Activated CD4-positive, alpha-beta memory T cell treated with anti-CD3 and anti-CD28 coated beads, Interleukin-2, amount 10 ng/mL, durations not matched to agents 7 days and 5 days (primary cell): ENCODE measurements at regions of chr17 and their contacts with region 1.

Region 1: DNA sequence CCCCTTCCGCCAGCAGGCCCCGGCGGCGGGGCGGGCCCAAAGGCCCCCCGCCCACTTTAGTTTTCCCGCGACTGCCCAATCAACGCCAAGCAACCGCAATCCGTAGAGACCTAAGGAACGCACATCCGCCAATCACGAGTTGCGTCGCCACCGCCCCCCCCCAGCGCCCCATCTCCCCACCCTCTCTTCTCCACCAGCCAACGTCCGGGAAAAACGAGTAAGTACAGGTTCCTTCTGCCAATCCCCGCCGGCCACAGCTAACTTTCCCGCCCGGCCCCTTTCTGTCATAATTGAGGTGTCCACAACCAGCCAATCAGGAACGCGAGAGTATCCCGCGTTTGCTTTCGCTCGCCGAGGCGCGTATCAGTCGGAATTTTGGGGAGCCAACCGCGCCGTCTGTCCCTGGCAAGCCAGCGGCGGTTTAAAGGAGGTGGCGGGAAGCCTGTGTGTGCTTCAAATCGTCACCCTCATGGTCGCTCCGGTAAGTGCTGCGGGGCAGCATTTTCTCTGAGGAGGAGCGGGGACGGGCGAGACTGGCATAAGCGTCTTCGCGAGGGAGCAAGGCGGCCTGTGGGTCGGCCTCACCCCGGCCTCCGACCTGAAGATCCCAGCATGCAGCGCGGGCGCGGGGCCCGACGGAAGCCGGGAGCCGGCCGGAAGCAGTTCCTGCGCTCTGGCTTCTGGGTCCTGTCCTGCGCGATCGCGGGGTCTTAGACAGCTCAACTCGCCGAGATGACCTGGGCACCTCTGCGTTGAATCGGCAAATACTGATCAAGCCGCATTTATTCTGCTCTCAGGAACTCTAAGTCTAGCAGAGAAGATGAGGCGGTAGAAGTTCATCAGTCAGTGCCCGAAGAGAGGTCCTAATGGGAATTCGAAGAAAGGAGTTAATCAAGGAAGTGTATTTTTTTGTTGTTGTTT is at the start of gene MIS12:
- DNase-seq: peak; percentile 98
- H3K4me3 Mint-ChIP-seq: peak within 1 kb of the TSS; percentile 90
- H3K27ac Mint-ChIP-seq: peak within 1 kb of the TSS; percentile 96
- H3K4me1 Mint-ChIP-seq: peaks cover 56% of the 10 kb centered on the region
- H3K27me3 Mint-ChIP-seq: no peaks in the 10 kb centered on the region
- total RNA-seq, gene MIS12: 28.7 to 29.0 TPM

Region 2: DNA sequence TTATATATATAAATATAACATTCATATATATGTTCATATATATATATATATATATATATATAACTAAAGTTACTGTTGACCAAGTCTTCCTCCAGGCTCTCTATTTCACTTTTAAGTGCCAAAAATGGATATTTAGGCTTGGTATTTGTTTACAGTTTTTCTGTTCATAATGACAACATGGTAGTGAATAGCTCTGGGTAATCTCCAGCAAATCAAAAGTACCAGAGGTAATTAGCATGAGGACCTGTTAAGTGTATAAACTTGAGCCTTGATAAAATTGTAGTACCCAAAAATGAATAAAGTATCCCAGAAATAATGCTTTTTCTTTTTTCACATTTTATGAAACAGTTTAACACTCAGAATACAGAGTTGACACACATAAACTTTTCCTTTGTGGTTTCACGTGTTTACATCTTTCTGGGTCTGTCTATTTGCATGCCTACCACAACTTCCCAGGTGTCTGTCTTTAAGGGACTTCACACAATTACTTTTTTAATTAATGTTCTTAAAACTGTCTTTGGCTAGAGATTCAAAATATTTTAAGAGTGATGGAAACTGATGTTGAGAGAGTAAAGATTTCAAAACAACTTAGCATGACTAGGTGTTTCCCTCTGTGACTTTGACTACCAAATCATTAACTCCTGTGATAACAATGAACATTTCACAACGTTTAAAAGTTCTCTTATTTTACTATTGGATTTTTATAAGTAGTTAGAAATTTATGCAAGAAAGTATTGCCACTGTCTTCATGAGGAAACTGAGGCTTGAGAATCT is 156.5 kb before region 1 on chr17:
- CTCF ChIA-PET with region 1: no interaction called
- POLR2A ChIA-PET with region 1: no interaction called
- DNase-seq: no peak
- H3K4me3 Mint-ChIP-seq: no peak overlapping the region
- H3K27ac Mint-ChIP-seq: peak overlapping the region; percentile 14
- H3K4me1 Mint-ChIP-seq: peaks cover 25% of the 10 kb centered on the region
- H3K27me3 Mint-ChIP-seq: no peaks in the 10 kb centered on the region

Region 3: GRCh38 chr17:5419356-5419958 is 67.0 kb before region 1 on chr17 and contains the start of gene NUP88:
- CTCF ChIA-PET with region 1: no interaction called
- POLR2A ChIA-PET with region 1: interaction called, 22 read pairs
- DNase-seq: peak; percentile 97
- H3K4me3 Mint-ChIP-seq: peak within 1 kb of the TSS; percentile 99
- H3K27ac Mint-ChIP-seq: peak within 1 kb of the TSS; percentile 99
- H3K4me1 Mint-ChIP-seq: peaks cover 45% of the 10 kb centered on the region
- H3K27me3 Mint-ChIP-seq: no peaks in the 10 kb centered on the region
- total RNA-seq, gene NUP88: 80.6 to 85.9 TPM

Region 4: DNA sequence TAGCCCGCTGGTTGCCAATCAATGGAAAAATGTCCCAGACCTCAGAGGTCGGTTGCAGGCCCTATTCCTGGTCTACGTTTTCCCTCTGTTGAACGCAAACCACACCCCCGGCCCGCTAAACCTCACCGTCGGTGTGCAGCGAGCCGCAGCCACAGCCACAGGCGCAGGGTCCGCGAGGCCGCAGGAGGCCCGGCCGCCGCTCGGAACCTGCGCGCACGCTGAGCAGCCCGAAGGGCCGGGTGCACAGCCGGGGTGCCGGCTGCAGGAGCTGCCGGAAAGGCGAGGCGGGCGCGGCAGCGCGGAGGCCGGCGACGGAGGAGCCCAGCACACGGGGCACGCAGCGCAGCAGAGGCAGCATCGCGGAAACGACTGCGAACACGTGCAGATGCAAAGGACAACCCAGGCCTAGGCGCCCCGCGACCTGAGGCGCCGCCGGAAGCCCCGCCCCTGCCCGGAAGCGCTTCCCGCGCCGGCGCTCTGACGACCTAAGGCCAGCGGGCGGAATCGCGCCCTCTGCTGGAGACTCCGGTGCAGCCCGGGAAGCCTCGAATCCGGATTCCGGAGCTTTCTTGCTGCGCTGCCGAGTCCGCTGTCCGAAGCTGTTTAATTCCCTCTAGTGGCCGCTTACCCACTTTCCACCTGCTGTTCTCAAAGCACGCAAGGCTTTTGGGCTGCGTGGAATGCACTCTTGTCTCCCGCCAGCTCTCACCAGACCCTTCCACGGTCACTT is 47.6 kb before region 1 on chr17 and contains the start of gene C1QBP:
- CTCF ChIA-PET with region 1: interaction called, 9 read pairs
- POLR2A ChIA-PET with region 1: interaction called, 39 read pairs
- DNase-seq: peak; percentile 94
- H3K4me3 Mint-ChIP-seq: peak within 1 kb of the TSS; percentile 72
- H3K27ac Mint-ChIP-seq: peak within 1 kb of the TSS; percentile 85
- H3K4me1 Mint-ChIP-seq: peaks cover 44% of the 10 kb centered on the region
- H3K27me3 Mint-ChIP-seq: no peaks in the 10 kb centered on the region
- total RNA-seq, gene C1QBP: 123 TPM

Region 5: GRCh38 chr17:5468075-5468473 is 18.4 kb before region 1 on chr17:
- CTCF ChIA-PET with region 1: interaction called, 5 read pairs
- POLR2A ChIA-PET with region 1: interaction called, 46 read pairs
- DNase-seq: peak; percentile 19
- H3K4me3 Mint-ChIP-seq: peak overlapping the region; percentile 84
- H3K27ac Mint-ChIP-seq: peak overlapping the region; percentile 32
- H3K4me1 Mint-ChIP-seq: peaks cover 44% of the 10 kb centered on the region
- H3K27me3 Mint-ChIP-seq: no peaks in the 10 kb centered on the region

Region 6: DNA sequence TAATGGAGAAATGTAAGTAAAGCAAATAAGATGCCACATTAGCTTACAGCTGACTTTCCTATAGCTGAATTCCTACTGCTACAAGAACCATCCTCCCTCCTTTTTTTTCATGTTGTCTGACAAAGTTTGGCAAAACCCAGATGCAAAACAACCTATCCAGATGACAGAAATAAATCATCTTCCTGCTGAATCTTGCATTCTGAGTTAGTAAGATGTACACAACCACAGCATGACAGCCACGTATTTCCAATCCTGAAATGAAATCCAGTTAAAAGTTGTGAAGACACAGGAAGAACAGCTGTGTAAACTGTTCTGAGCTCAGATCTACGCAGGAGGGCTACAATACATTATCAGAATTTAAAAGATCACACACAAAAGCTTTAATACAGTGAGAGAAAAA is 12.6 kb before region 1 on chr17:
- CTCF ChIA-PET with region 1: interaction called, 4 read pairs
- POLR2A ChIA-PET with region 1: interaction called, 46 read pairs
- DNase-seq: no peak
- H3K4me3 Mint-ChIP-seq: no peak overlapping the region
- H3K27ac Mint-ChIP-seq: no peak overlapping the region
- H3K4me1 Mint-ChIP-seq: peaks cover 11% of the 10 kb centered on the region
- H3K27me3 Mint-ChIP-seq: no peaks in the 10 kb centered on the region

Region 7: DNA sequence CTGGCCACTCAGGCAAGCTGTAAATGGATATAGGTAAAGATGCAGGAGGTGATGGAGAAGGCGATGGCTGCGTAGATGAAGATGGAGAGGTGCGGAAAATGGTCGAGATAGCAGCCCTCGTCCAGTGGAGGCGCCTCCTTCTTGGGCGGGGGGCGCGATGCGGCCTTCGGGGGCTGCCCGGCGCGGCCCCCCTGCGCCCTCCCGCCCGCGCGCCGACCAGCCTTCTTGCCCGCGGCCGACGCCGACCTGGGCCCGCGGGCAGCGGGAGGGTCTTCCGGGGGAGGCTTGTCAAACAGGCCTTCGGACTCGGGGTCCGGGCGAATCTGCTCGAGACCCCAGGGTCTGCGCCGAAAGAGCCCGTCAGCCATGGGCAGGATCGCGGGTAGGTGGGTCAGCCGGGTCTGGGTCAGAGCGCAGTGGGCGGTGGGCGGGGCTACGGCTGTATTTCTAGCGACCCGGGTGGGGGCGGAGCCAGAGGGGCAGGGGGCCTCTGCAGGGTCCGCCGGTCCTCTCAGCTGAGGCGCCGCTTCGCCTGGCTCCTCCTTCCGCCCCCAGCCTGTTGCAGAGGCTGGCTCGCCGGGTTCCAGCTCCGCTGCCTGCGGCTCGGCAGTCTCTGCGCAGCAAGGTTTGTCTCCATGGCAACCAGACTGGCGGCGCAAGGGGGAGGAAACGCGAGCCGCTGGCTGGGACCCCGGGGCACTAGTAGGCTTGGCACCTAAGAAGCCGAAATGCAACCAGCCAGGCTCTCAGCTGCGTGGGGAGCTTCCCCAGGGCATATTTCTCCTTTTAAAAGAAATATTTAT is 14.3 kb after region 1 on chr17:
- CTCF ChIA-PET with region 1: interaction called, 5 read pairs
- POLR2A ChIA-PET with region 1: interaction called, 33 read pairs
- DNase-seq: peak; percentile 73
- H3K4me3 Mint-ChIP-seq: peak overlapping the region; percentile 80
- H3K27ac Mint-ChIP-seq: no peak overlapping the region
- H3K4me1 Mint-ChIP-seq: peaks cover 20% of the 10 kb centered on the region
- H3K27me3 Mint-ChIP-seq: peaks cover 10% of the 10 kb centered on the region

Region 8: DNA sequence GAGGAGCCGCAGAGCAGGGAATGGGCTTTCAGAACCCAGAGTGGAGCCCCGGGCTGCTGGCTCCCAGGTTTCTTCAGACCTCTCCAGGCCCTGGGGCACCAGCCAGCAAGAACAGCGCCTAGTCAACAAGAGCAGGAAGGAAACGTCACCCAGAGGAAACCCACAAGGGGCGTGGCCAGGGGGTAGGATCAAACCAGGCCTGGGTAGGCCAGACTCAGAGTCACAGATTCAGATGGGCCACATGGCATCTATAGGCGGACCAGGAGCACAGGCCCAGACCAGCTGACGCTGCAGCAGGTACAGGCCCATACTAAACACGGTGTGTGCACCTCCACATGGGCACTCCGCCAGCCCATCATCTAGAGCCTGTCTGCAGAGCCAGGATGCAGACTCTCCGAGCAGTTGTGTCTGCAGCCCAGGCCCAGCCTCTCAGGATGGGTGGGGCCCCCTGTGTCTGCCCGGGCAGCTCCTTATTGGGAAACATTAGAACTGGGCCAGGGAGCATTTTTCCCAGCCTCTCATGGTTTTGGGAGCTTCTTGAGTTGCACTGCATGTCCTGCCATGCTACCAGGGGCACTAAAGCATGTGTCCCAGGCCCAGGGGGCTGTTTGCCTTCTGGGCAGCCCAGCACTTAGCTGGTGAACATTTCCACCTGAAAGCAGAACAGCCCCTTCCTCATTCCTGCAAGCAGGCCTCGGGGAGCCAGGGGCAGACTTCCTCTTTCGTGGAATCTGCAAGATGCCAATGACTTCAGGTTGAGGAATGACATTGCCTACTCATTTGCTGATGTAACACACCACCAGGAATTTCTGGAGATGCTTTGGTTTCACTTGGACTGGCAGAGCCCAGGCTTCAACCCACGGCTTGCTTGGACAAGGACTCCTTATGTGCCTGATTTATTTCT is 98.2 kb after region 1 on chr17 and contains the start of gene NLRP1:
- CTCF ChIA-PET with region 1: no interaction called
- POLR2A ChIA-PET with region 1: interaction called, 26 read pairs
- DNase-seq: peak; percentile 97
- H3K4me3 Mint-ChIP-seq: peak within 1 kb of the TSS; percentile 98
- H3K27ac Mint-ChIP-seq: peak within 1 kb of the TSS; percentile 96
- H3K4me1 Mint-ChIP-seq: peaks cover 73% of the 10 kb centered on the region
- H3K27me3 Mint-ChIP-seq: peaks cover 6% of the 10 kb centered on the region
- total RNA-seq, gene NLRP1: 102 to 104 TPM